Aorta (tissue), 5 donors: ENCODE measurements at regions of chr9 and their contacts with region 1.

Region 1: GRCh38 chr9:100011062-100011681 is 87.6 kb downstream of the ERP44 start:
- DNase-seq: no peak
- ATAC-seq: no peak
- H3K4me3 ChIP-seq: no peak overlapping the region
- H3K27ac ChIP-seq: no peak overlapping the region
- H3K4me1 ChIP-seq: no peaks in the 10 kb centered on the region
- H3K27me3 ChIP-seq: no peaks in the 10 kb centered on the region

Region 2: GRCh38 chr9:99199938-99200539 is 811.1 kb before region 1 on chr9:
- intact Hi-C with region 1: loop called in 1 of 2 experiments (anchors 10 kb)
- DNase-seq: no peak
- ATAC-seq: no peak
- H3K4me3 ChIP-seq: no peak overlapping the region
- H3K27ac ChIP-seq: no peak overlapping the region
- H3K4me1 ChIP-seq: no peaks in the 10 kb centered on the region
- H3K27me3 ChIP-seq: no peaks in the 10 kb centered on the region